B cell (primary cell): ENCODE measurements at regions of chr6 and their contacts with region 1.

Region 1: GRCh38 chr6:149389509-149390297 is 10.4 kb upstream of the SUMO4 start:
- DNase-seq: no peak
- ATAC-seq: no peak
- H3K4me3 ChIP-seq: no peak overlapping the region
- H3K4me3 Mint-ChIP-seq: no peak overlapping the region
- H3K27ac ChIP-seq: no peak overlapping the region
- H3K27ac Mint-ChIP-seq: no peak overlapping the region
- H3K4me1 ChIP-seq: no peaks in the 10 kb centered on the region
- H3K4me1 Mint-ChIP-seq: peaks cover 6% of the 10 kb centered on the region
- H3K27me3 ChIP-seq: no peaks in the 10 kb centered on the region
- H3K27me3 Mint-ChIP-seq: no peaks in the 10 kb centered on the region
- CTCF ChIP-seq: no peak

Region 2: GRCh38 chr6:149354009-149354408 is 35.7 kb before region 1 on chr6:
- CTCF ChIA-PET with region 1: no interaction called
- POLR2A ChIA-PET with region 1: no interaction called
- intact Hi-C with region 1: loop called (anchors 5 kb)
- DNase-seq: no peak
- ATAC-seq: no peak
- H3K4me3 ChIP-seq: no peak overlapping the region
- H3K4me3 Mint-ChIP-seq: no peak overlapping the region
- H3K27ac ChIP-seq: no peak overlapping the region
- H3K27ac Mint-ChIP-seq: no peak overlapping the region
- H3K4me1 ChIP-seq: peaks cover 5 to 8% of the 10 kb centered on the region in 2 donors
- H3K4me1 Mint-ChIP-seq: peaks cover 53% of the 10 kb centered on the region
- H3K27me3 ChIP-seq: no peaks in the 10 kb centered on the region
- H3K27me3 Mint-ChIP-seq: no peaks in the 10 kb centered on the region
- CTCF ChIP-seq: no peak

Region 3: GRCh38 chr6:149405823-149406765 is 16.4 kb after region 1 on chr6:
- CTCF ChIA-PET with region 1: no interaction called
- POLR2A ChIA-PET with region 1: no interaction called
- intact Hi-C with region 1: no loop called
- DNase-seq: no peak
- ATAC-seq: no peak
- H3K4me3 ChIP-seq: no peak overlapping the region
- H3K4me3 Mint-ChIP-seq: no peak overlapping the region
- H3K27ac ChIP-seq: no peak overlapping the region
- H3K27ac Mint-ChIP-seq: no peak overlapping the region
- H3K4me1 ChIP-seq: no peaks in the 10 kb centered on the region
- H3K4me1 Mint-ChIP-seq: peaks cover 2% of the 10 kb centered on the region
- H3K27me3 ChIP-seq: no peaks in the 10 kb centered on the region
- H3K27me3 Mint-ChIP-seq: no peaks in the 10 kb centered on the region
- CTCF ChIP-seq: no peak

Region 4: DNA sequence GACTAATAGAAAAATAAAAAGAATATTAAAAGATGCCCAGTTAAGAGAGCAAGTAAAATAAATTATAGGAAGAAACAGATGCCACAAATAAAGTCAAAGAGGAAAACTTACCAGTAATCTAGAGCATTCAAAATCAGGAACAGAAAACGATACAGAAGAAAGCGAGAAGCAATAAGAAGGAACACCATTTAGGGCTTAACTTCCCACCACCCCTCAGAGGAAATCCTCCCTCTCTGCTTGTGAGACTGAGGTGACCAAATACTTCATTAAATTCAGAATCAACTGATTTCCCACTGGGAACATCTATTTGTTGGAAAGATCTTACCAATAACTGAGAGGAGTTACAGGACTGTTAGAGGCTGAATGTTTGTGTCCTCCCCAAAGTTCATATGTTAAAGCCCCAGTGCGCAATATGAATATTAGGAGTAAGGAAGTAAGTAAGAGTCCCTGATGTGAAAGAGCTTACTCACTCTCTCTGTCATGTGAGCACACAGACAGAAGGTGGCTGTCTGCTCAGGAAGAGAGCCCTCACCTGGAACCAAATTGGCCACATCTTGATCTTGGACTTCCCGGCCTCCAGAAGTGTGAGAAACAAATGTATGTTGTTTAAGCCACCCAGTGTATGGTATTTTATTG is 239.3 kb after region 1 on chr6:
- CTCF ChIA-PET with region 1: no interaction called
- POLR2A ChIA-PET with region 1: no interaction called
- intact Hi-C with region 1: no loop called
- DNase-seq: peak; percentile 55
- ATAC-seq: peak; percentile 70
- H3K4me3 ChIP-seq: no peak overlapping the region
- H3K4me3 Mint-ChIP-seq: peak overlapping the region; percentile 27
- H3K27ac ChIP-seq: peak overlapping the region in 1 of 2 donors; percentile 81
- H3K27ac Mint-ChIP-seq: peak overlapping the region; percentile 89
- H3K4me1 ChIP-seq: peaks cover 7 to 12% of the 10 kb centered on the region in 2 donors
- H3K4me1 Mint-ChIP-seq: peaks cover 16% of the 10 kb centered on the region
- H3K27me3 ChIP-seq: no peaks in the 10 kb centered on the region
- H3K27me3 Mint-ChIP-seq: no peaks in the 10 kb centered on the region
- CTCF ChIP-seq: no peak